ENCODE measurements at regions of chrX and their contacts with region 1.

Region 1: DNA sequence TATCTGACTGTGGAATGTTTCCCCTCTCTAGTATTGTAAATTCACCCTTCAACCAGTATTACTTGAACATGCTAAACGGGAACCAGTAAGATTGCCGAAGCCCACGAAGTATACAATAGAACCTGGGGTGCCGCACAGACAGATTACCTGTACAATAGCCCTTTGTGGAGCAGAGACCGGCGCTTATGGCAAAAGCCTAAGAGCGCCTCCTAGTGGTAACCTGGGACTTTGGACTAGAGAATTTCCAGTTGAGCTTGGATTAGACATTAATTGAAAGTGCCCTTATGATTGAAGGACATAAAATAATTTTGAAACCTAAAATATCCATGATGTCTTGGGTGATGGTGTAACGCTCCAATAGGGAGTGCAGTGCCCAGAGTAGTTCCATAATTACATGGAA is 14.1 kb downstream of the ZNF157 start:
- DNase-seq: peak; percentile 14 to 69
- ATAC-seq: peak; percentile 47 to 78; a peak in 4 of 6 replicates
- H3K4me3 ChIP-seq: no peak overlapping the region
- H3K27ac ChIP-seq: no peak overlapping the region
- H3K4me1 ChIP-seq: no peaks in the 10 kb centered on the region
- CTCF ChIP-seq: peak; percentile 70
- EP300 ChIP-seq: no peak
- POLR2A ChIP-seq: no peak
- RAD21 ChIP-seq: peak; percentile 70 to 79

Region 2: GRCh38 chrX:47193475-47194193 is 190.9 kb before region 1 on chrX and contains the start of gene UBA1:
- CTCF ChIA-PET with region 1: interaction called, 16 read pairs
- POLR2A ChIA-PET with region 1: no interaction called
- DNase-seq: peak; percentile 88 to 96
- ATAC-seq: peak; percentile 70 to 84
- H3K4me3 ChIP-seq: peak within 1 kb of the TSS; percentile 93
- H3K27ac ChIP-seq: peak within 1 kb of the TSS; percentile 99
- H3K4me1 ChIP-seq: peaks cover 42% of the 10 kb centered on the region
- CTCF ChIP-seq: peak; percentile 78
- EP300 ChIP-seq: no peak
- POLR2A ChIP-seq: peak; percentile 91
- RAD21 ChIP-seq: peak; percentile 85 to 89
- polyA plus RNA-seq, gene UBA1: 160 and 192 TPM in 2 replicates

Region 3: GRCh38 chrX:47373198-47373597 is 11.3 kb before region 1 on chrX:
- CTCF ChIA-PET with region 1: interaction called, 12 read pairs
- POLR2A ChIA-PET with region 1: no interaction called
- DNase-seq: no peak
- ATAC-seq: no peak
- H3K4me3 ChIP-seq: no peak overlapping the region
- H3K27ac ChIP-seq: no peak overlapping the region
- H3K4me1 ChIP-seq: no peaks in the 10 kb centered on the region
- CTCF ChIP-seq: no peak
- EP300 ChIP-seq: no peak
- POLR2A ChIP-seq: no peak
- RAD21 ChIP-seq: no peak

Region 4: DNA sequence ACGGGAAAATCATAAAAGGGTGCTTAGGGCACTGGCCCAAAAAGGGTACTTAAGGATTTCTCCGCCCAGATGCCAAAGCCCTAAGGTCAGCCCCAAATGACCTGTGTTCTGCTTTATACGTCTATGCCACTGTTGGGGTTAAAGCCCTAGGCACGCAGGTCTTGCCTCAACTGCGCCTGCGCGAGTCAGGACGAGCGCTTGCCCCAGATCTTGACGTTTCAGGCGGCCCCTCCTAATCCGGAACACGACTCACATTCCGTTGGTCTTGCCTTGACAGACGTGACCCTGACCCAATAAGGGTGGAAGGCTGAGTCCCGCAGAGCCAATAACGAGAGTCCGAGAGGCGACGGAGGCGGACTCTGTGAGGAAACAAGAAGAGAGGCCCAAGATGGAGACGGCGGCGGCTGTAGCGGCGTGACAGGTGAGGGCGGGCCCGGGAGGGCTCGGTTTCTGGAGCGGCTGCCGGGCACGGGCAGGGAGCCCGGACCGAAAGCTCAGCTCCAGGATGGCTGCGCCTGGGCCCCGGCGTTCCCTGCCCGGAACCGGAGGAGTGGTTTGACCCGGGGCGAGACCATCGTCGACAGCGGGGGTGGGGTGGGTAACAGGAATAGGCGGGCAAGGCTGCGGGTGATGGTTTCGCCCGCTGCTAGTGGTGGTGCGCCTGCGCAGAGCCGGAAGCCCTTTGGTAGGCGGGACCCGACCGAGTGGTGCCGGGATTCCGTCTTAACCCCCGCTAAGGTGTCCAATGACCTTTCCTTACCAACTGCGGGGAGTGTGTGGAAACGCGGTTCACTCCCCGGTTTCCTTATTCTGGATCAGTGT is 176.5 kb after region 1 on chrX and contains the start of gene ARAF:
- CTCF ChIA-PET with region 1: no interaction called
- POLR2A ChIA-PET with region 1: no interaction called
- DNase-seq: peak; percentile 95 to 100
- ATAC-seq: peak; percentile 94 to 96
- H3K4me3 ChIP-seq: peak within 1 kb of the TSS; percentile 95
- H3K27ac ChIP-seq: peak within 1 kb of the TSS; percentile 99 to 100
- H3K4me1 ChIP-seq: peaks cover 16% of the 10 kb centered on the region; the same call in 2 of the 3 replicates
- CTCF ChIP-seq: no peak
- EP300 ChIP-seq: no peak
- POLR2A ChIP-seq: peak; percentile 51
- RAD21 ChIP-seq: no peak
- polyA plus RNA-seq, gene ARAF: 37.9 and 60.7 TPM in 2 replicates

Measured in A549 (cell line).